ENCODE measurements at regions of chr17 and their contacts with region 1.

Region 1: DNA sequence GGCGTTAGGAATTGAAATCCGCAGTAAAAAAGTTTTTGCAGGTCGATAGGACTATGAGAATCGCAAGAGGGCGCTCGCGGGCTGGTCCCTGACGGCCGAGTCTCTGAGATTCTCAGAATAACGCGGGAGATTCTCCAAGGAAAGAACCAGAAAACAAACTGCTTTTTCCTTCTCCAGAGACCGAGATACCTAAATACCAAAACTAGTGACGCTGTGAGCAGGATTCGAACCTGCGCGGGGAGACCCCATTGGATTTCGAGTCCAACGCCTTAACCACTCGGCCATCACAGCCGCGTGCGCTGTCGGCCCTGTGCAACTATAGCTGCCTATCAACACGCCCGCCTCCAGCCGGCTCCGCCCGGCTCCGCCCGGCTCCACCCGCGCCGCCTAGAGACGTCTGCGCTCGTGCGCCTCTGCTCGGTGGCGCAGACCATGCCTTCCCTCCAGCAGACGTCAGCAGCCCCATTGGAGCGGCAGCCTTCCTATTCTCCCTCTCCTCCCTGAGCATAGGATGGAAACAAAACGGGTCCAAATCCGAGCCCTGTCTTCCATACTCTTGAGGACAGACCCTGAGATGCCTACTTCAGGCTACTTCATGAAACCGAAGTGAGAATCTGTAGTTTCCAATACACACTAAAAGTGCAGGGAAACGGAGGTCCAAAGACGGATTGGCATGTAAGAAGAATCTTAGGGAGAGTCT is 13.4 kb downstream of the PER1 start:
- DNase-seq: peak; percentile 91 to 97 (median 95)
- ATAC-seq: peak; percentile 86
- H3K4me3 ChIP-seq: peak overlapping the region; percentile 71
- H3K4me3 Mint-ChIP-seq: no peak overlapping the region
- H3K27ac ChIP-seq: peak overlapping the region; percentile 71 to 91
- H3K27ac Mint-ChIP-seq: no peak overlapping the region
- H3K4me1 ChIP-seq: peaks cover 26% of the 10 kb centered on the region
- H3K4me1 Mint-ChIP-seq: peaks cover 2% of the 10 kb centered on the region
- H3K27me3 ChIP-seq: no peaks in the 10 kb centered on the region
- H3K27me3 Mint-ChIP-seq: peaks cover 2% of the 10 kb centered on the region
- CTCF ChIP-seq: peak; percentile 75

Region 2: DNA sequence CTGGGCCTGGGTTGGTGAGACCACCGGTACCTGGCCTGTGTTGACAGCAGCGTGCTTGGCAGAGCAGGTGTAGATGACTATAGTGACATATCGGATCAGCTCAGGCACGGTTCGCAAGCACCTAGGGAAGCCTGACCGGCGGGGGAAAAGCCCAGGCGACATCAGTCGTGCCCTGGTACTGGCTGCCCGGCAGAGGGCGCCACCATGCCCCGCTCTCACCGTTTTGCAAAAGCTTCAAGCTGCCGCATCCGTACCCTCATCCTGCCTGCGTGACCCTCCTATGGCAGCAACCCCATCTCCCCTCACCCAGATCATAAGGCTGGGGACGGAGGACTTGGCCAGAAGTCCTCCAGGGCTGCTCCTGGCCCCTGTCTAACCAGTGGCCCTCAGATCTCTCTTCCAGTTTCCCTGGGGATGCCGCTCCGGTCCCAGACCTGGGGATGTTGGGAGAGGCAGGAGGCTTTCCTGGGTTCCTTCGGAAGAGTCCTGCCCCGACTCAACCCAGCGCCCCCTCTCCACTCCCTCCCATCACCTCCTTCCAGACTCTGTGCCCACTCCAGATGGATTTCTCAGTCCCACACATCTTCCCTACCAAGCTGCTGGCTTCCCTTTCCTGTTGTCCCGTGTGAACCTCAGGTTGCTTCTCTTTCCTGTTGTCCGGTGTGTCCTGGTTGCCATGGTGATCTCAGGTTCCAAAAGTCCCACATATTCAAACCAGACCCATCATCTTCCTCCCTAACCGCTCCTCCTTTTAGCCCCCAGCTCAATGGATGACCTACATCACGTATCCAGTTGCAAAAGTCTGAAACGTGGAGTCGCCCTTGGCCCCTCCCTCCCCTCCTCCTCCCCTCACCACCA is 65.0 kb before region 1 on chr17:
- CTCF ChIA-PET with region 1: interaction called, 11 read pairs
- POLR2A ChIA-PET with region 1: no interaction called
- intact Hi-C with region 1: no loop called
- DNase-seq: peak; percentile 75 to 95 (median 83)
- ATAC-seq: peak; percentile 94
- H3K4me3 ChIP-seq: peak overlapping the region; percentile 31
- H3K4me3 Mint-ChIP-seq: peak overlapping the region; percentile 87
- H3K27ac ChIP-seq: no peak overlapping the region
- H3K27ac Mint-ChIP-seq: peak overlapping the region; percentile 18
- H3K4me1 ChIP-seq: peaks cover 25% of the 10 kb centered on the region
- H3K4me1 Mint-ChIP-seq: peaks cover 26% of the 10 kb centered on the region
- H3K27me3 ChIP-seq: peaks cover 27 to 39% of the 10 kb centered on the region in 2 experiments
- H3K27me3 Mint-ChIP-seq: peaks cover 44% of the 10 kb centered on the region
- CTCF ChIP-seq: peak; percentile 91

Region 3: GRCh38 chr17:8125157-8125946 is 13.5 kb before region 1 on chr17:
- CTCF ChIA-PET with region 1: interaction called, 42 read pairs
- POLR2A ChIA-PET with region 1: interaction called, 59 read pairs
- intact Hi-C with region 1: loop called (anchors 1 to 2 kb)
- DNase-seq: peak; percentile 76 to 93 (median 86)
- ATAC-seq: peak; percentile 39
- H3K4me3 ChIP-seq: peak overlapping the region; percentile 69
- H3K4me3 Mint-ChIP-seq: peak overlapping the region; percentile 91
- H3K27ac ChIP-seq: no peak overlapping the region
- H3K27ac Mint-ChIP-seq: peak overlapping the region; percentile 83
- H3K4me1 ChIP-seq: peaks cover 66% of the 10 kb centered on the region
- H3K4me1 Mint-ChIP-seq: peaks cover 57% of the 10 kb centered on the region
- H3K27me3 ChIP-seq: peaks cover 27 to 28% of the 10 kb centered on the region in 2 experiments
- H3K27me3 Mint-ChIP-seq: peaks cover 41% of the 10 kb centered on the region
- CTCF ChIP-seq: no peak

Region 4: DNA sequence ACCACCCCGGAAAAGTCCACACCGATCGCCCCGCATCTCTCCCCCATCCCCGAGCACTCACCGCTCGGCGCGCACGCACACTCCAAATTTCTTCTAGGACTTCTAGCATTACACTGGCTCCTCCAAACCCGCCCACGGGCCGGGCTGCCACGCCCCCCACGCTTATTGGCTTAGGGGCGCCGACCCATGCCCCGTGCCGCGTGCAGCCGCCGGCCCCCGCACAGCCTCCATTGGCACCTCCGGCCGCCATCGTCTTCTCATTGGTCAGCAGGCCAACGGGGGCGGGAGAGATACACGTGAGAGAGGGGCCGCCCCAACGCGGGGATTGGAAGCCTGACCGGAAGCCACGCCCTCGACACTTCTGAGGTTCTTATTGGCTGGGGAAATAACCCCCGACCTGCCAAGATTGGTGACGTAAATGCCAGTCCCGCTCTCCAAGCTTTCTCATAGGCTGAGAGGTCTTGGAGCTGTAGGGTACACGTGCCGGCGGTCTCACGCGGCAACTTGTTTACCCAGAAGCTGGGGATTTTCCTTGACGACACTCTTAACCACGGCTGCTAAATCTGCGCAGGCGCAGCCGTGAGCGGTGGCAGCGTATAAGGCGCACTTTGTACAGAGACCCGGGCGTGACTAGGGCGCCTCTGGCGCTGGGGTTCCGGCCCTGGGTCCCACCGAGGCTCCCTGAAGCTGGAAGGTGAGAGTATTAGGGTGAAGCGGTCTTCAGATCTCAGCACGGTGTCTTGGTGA is 17.6 kb after region 1 on chr17:
- CTCF ChIA-PET with region 1: interaction called, 32 read pairs
- POLR2A ChIA-PET with region 1: interaction called, 105 read pairs
- intact Hi-C with region 1: loop called (anchors 1 kb)
- DNase-seq: peak; percentile 99 to 100 (median 100)
- ATAC-seq: peak; percentile 70
- H3K4me3 ChIP-seq: peak overlapping the region; percentile 86
- H3K4me3 Mint-ChIP-seq: no peak overlapping the region
- H3K27ac ChIP-seq: peak overlapping the region; percentile 99 to 100
- H3K27ac Mint-ChIP-seq: no peak overlapping the region
- H3K4me1 ChIP-seq: peaks cover 88% of the 10 kb centered on the region
- H3K4me1 Mint-ChIP-seq: peaks cover 73% of the 10 kb centered on the region
- H3K27me3 ChIP-seq: no peaks in the 10 kb centered on the region
- H3K27me3 Mint-ChIP-seq: peaks cover 3% of the 10 kb centered on the region
- CTCF ChIP-seq: no peak

Region 5: GRCh38 chr17:8173056-8173870 is 34.4 kb after region 1 on chr17:
- CTCF ChIA-PET with region 1: interaction called, 5 read pairs
- POLR2A ChIA-PET with region 1: interaction called, 36 read pairs
- intact Hi-C with region 1: loop called in 1 of 2 experiments (anchors 2 kb)
- DNase-seq: peak in 13 of 14 experiments; percentile 56 to 95 (median 70)
- ATAC-seq: peak; percentile 81
- H3K4me3 ChIP-seq: peak overlapping the region; percentile 49
- H3K4me3 Mint-ChIP-seq: peak overlapping the region; percentile 90
- H3K27ac ChIP-seq: peak overlapping the region; percentile 95 to 98
- H3K27ac Mint-ChIP-seq: peak overlapping the region; percentile 99
- H3K4me1 ChIP-seq: peaks cover 48% of the 10 kb centered on the region
- H3K4me1 Mint-ChIP-seq: peaks cover 51% of the 10 kb centered on the region
- H3K27me3 ChIP-seq: no peaks in the 10 kb centered on the region
- H3K27me3 Mint-ChIP-seq: no peaks in the 10 kb centered on the region
- CTCF ChIP-seq: no peak

Region 6: GRCh38 chr17:8294814-8295316 is 156.0 kb after region 1 on chr17:
- CTCF ChIA-PET with region 1: interaction called, 6 read pairs
- POLR2A ChIA-PET with region 1: interaction called, 13 read pairs
- intact Hi-C with region 1: loop called in 1 of 2 experiments (anchors 1 kb)
- DNase-seq: no peak
- ATAC-seq: no peak
- H3K4me3 ChIP-seq: peak overlapping the region; percentile 72
- H3K4me3 Mint-ChIP-seq: peak overlapping the region; percentile 95
- H3K27ac ChIP-seq: peak overlapping the region; percentile 48 to 73
- H3K27ac Mint-ChIP-seq: peak overlapping the region; percentile 79
- H3K4me1 ChIP-seq: peaks cover 26% of the 10 kb centered on the region
- H3K4me1 Mint-ChIP-seq: peaks cover 39% of the 10 kb centered on the region
- H3K27me3 ChIP-seq: no peaks in the 10 kb centered on the region
- H3K27me3 Mint-ChIP-seq: no peaks in the 10 kb centered on the region
- CTCF ChIP-seq: no peak

Region 7: DNA sequence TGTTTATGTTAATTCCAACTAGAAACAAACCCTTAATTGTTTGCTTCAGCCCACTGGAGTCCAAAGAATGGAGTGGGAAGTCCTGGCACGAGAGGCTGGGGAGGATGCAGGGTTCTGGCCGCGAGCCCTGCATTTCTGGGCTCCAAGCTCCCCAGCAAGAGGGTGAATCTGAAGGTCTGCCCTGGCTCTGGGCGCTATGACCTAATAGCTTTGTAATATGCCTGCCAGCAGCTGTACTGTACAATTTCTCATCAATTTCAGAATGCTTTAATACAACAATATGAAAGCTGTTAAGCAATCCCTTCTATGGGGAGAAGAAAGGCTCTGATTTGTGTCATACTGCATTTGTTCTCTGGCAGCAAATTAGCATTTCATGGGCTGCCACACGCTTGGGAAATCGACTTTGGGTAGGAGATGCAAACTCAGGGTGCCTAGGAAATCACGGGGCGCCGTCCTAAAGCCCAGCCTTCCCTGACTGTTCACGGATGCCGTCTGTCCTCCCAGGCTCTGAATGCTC is 340.7 kb after region 1 on chr17:
- CTCF ChIA-PET with region 1: no interaction called
- POLR2A ChIA-PET with region 1: no interaction called
- intact Hi-C with region 1: no loop called
- DNase-seq: no peak
- ATAC-seq: no peak
- H3K4me3 ChIP-seq: no peak overlapping the region
- H3K4me3 Mint-ChIP-seq: no peak overlapping the region
- H3K27ac ChIP-seq: no peak overlapping the region
- H3K27ac Mint-ChIP-seq: no peak overlapping the region
- H3K4me1 ChIP-seq: no peaks in the 10 kb centered on the region
- H3K4me1 Mint-ChIP-seq: no peaks in the 10 kb centered on the region
- H3K27me3 ChIP-seq: no peaks in the 10 kb centered on the region
- H3K27me3 Mint-ChIP-seq: no peaks in the 10 kb centered on the region
- CTCF ChIP-seq: no peak

Measured in CD4-positive, alpha-beta T cell (primary cell).